ENCODE measurements at regions of chrX and their contacts with region 1.

Region 1: GRCh38 chrX:133698298-133698697 is 283.0 kb upstream of the GPC4 start:
- DNase-seq: no peak
- H3K4me3 ChIP-seq: no peak overlapping the region
- H3K27ac ChIP-seq: no peak overlapping the region
- H3K4me1 ChIP-seq: no peaks in the 10 kb centered on the region
- H3K27me3 ChIP-seq: peaks cover 0 to 8% of the 10 kb centered on the region in 2 donors
- CTCF ChIP-seq: no peak
- POLR2A ChIP-seq: no peak

Region 2: GRCh38 chrX:132209527-132209926 is 1488.8 kb before region 1 on chrX:
- intact Hi-C with region 1: loop called (anchors 10 kb)
- DNase-seq: no peak
- H3K4me3 ChIP-seq: no peak overlapping the region
- H3K27ac ChIP-seq: no peak overlapping the region
- H3K4me1 ChIP-seq: no peaks in the 10 kb centered on the region
- H3K27me3 ChIP-seq: peaks cover 0 to 11% of the 10 kb centered on the region in 2 donors
- CTCF ChIP-seq: no peak
- POLR2A ChIP-seq: no peak

Region 3: GRCh38 chrX:133685822-133686221 is 12.5 kb before region 1 on chrX:
- intact Hi-C with region 1: no loop called
- DNase-seq: no peak
- H3K4me3 ChIP-seq: no peak overlapping the region
- H3K27ac ChIP-seq: no peak overlapping the region
- H3K4me1 ChIP-seq: no peaks in the 10 kb centered on the region
- H3K27me3 ChIP-seq: peaks cover 0 to 36% of the 10 kb centered on the region in 2 donors
- CTCF ChIP-seq: no peak
- POLR2A ChIP-seq: no peak